Gastrocnemius medialis (tissue), 4 donors: ENCODE measurements at regions of chr9 and their contacts with region 1.

Region 1: DNA sequence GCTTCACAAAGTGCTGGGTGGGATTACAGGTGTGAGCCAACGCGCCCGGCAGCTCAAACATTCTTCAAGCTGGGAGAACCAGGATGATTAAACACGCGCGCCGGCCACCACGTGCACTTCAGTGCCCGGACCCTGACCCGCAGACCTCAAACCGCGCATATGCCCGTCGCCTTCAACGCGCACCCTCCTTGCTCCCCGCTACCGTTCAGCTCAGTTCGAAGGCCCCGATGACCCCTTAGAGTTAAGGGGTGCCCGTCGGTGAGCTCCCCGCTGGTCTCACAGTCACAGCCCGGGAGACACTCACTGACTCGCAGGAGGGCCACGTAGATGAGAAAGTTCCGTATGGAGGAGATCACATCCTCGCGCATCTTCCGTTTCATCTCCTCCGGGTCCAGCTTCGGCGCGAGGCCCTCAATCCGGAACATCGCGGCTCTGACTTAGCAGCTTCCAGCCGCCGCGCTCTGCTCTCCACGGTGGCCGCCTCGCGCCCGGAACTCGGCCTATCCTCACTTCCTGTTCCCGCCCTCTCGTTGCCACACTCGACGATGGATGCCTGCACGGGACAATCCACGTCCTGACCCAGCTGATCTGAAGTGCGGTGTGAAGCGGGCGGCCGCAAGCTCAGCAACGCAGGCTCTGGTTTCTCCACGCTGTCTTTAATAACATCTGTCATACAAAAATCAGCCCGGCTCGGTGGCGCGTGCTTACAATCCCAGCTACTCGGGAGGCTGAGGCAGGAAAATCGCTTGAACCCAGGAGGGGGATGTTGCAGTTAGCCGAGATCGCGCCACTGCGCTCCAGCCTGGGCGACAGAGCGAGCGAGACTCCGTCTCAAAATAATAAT is at the start of gene TOMM5:
- DNase-seq: peak; percentile 92
- ATAC-seq: peak; percentile 92 to 95
- H3K4me3 ChIP-seq: peak within 1 kb of the TSS; percentile 88 to 98 (median 92)
- H3K27ac ChIP-seq: peak within 1 kb of the TSS; percentile 89 to 94 (median 92)
- H3K4me1 ChIP-seq: peaks cover 22 to 29% of the 10 kb centered on the region in 2 donors
- H3K27me3 ChIP-seq: no peaks in the 10 kb centered on the region
- CTCF ChIP-seq: peak in 1 of 5 experiments; percentile 26
- POLR2A ChIP-seq: peak; percentile 88 to 95
- total RNA-seq, gene TOMM5: 75.3 to 137 (median 93.3) TPM

Region 2: DNA sequence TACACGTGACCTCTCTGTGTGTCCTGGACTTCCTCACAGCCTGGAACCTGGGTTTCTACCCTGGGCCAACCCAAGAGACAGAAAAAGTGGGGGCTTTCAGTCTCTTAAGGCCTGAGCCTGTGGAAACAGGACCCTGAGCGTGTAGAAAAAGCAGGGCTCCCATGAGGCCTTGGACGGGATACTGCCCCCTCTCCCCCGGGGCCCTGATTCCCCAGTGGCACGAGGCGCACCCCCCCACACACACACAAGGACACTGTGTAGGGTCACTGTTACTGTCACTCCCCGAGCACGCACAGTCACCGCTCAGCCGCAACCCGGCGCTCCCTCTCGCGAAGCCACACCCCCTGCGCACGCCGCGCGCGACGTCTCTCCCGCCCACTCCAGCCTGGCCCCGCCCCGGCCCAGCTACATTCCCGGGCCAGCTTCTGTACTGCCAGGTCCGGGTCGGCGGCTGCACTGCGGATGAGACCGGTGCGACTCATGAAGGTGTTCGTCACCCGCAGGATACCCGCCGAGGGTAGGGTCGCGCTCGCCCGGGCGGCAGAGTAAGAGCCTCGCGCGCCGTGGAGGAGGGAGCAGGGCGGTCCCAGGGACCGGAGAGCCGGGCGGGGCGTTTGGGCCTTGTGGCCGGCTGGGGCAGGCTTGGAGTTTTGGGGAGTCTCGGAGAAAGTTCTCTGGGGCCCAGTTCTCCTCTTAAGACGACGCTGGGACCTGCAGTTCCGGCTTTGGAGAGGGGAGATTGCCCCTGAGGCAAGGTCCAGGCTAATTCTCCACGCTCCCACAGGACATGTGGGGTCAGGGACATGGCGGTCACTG is 169.8 kb before region 1 on chr9 and contains the start of gene GRHPR:
- in situ Hi-C with region 1: no loop called
- intact Hi-C with region 1: loop called (anchors 5 kb)
- DNase-seq: peak; percentile 83 to 88
- ATAC-seq: peak; percentile 93 to 94
- H3K4me3 ChIP-seq: peak within 1 kb of the TSS; percentile 80 to 96 (median 92)
- H3K27ac ChIP-seq: peak within 1 kb of the TSS; percentile 86 to 94 (median 92)
- H3K4me1 ChIP-seq: peaks cover 25 to 27% of the 10 kb centered on the region in 2 donors
- H3K27me3 ChIP-seq: no peaks in the 10 kb centered on the region
- CTCF ChIP-seq: no peak
- POLR2A ChIP-seq: peak; percentile 69 to 75
- total RNA-seq, gene GRHPR: 119 to 138 (median 128) TPM

Region 3: GRCh38 chr9:37575921-37576721 is 16.2 kb before region 1 on chr9 and contains the start of gene FBXO10:
- in situ Hi-C with region 1: no loop called
- intact Hi-C with region 1: loop called (anchors 2 kb)
- DNase-seq: peak; percentile 53 to 72
- ATAC-seq: peak; percentile 62 to 71
- H3K4me3 ChIP-seq: peak within 1 kb of the TSS; percentile 84 to 96 (median 93)
- H3K27ac ChIP-seq: peak within 1 kb of the TSS; percentile 94 to 99 (median 98)
- H3K4me1 ChIP-seq: peaks cover 35 to 42% of the 10 kb centered on the region in 2 donors
- H3K27me3 ChIP-seq: no peaks in the 10 kb centered on the region
- CTCF ChIP-seq: peak in 1 of 5 experiments; percentile 24
- POLR2A ChIP-seq: peak; percentile 95 to 96
- total RNA-seq, gene FBXO10: 49.8 to 62.2 (median 53.5) TPM

Region 4: DNA sequence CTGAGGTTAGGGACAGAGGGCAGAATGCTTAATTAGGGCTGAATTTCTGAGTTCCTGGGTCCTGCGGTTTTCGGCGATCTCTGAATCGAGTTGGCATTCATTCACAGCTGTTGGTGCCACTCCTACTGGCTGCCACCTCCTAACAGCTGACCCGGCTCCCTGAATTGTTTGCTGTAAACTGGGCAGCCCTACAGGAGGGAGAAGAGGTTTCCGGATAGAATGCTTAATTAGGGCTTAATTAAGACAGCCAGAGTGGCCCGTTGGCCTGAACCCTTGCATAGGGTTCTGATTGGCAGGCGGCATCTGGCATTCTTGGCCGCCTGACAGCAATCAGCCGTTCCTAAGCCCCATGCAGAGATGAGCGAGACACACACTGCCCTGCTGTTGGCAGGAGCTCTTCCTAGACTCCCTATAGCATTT is 84.1 kb after region 1 on chr9:
- in situ Hi-C with region 1: loop called in 2 of 4 experiments (anchors 10 kb)
- intact Hi-C with region 1: no loop called
- DNase-seq: peak; percentile 52 to 54
- ATAC-seq: peak; percentile 84 to 85
- H3K4me3 ChIP-seq: peak overlapping the region; percentile 27 to 49 (median 42)
- H3K27ac ChIP-seq: peak overlapping the region; percentile 69 to 81 (median 74)
- H3K4me1 ChIP-seq: peaks cover 25 to 32% of the 10 kb centered on the region in 2 donors
- H3K27me3 ChIP-seq: no peaks in the 10 kb centered on the region
- CTCF ChIP-seq: no peak
- POLR2A ChIP-seq: no peak

Region 5: DNA sequence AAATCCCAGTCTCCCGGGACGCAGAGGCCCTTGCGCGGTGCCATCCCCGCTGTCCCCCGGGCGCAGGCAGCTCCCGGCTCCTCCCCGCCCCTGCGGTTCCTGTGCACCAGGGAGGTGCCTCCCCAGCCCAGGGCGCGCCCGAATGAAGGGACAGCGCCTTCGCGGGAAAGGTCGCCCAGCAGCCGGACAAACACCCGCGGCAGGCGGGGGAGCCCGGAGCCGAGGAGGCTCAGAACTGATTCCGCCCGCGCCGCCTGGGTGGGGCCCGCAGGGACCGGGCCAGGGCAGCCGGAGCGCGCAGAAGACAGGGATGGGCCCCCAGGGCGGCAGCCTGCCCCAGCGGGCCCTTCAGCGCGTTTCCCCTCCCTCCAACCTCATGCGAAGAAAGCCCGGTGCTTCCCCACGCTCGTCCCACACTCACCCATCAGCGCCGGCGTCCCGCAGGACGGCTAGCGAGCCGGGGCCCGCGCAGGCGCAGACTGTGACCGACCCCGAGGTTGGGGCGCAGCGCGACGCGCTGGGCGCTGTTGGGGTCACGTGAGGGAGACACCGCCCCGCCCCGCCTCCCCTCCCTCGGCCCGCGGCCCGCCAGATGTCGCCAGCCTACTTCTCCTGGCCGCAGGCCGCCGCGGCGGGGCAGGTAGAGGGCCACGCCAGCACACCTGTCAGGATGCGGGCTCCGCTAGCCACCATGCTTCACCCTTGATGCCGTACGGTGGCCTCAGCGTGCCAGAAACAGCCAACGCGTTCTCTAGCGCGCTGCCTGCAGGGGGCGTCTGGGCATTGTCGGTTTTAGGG is 311.5 kb after region 1 on chr9 and contains the start of gene SLC25A51:
- in situ Hi-C with region 1: loop called in 1 of 4 experiments (anchors 25 kb)
- intact Hi-C with region 1: no loop called
- DNase-seq: peak; percentile 80 to 91
- ATAC-seq: peak; percentile 92 to 95
- H3K4me3 ChIP-seq: peak within 1 kb of the TSS; percentile 75 to 93 (median 85)
- H3K27ac ChIP-seq: peak within 1 kb of the TSS; percentile 86 to 90 (median 88)
- H3K4me1 ChIP-seq: peaks cover 16 to 17% of the 10 kb centered on the region in 2 donors
- H3K27me3 ChIP-seq: no peaks in the 10 kb centered on the region
- CTCF ChIP-seq: peak; percentile 90 to 97 (median 96)
- POLR2A ChIP-seq: peak; percentile 74 to 81
- total RNA-seq, gene SLC25A51: 16.0 to 30.7 (median 22.2) TPM

Region 6: DNA sequence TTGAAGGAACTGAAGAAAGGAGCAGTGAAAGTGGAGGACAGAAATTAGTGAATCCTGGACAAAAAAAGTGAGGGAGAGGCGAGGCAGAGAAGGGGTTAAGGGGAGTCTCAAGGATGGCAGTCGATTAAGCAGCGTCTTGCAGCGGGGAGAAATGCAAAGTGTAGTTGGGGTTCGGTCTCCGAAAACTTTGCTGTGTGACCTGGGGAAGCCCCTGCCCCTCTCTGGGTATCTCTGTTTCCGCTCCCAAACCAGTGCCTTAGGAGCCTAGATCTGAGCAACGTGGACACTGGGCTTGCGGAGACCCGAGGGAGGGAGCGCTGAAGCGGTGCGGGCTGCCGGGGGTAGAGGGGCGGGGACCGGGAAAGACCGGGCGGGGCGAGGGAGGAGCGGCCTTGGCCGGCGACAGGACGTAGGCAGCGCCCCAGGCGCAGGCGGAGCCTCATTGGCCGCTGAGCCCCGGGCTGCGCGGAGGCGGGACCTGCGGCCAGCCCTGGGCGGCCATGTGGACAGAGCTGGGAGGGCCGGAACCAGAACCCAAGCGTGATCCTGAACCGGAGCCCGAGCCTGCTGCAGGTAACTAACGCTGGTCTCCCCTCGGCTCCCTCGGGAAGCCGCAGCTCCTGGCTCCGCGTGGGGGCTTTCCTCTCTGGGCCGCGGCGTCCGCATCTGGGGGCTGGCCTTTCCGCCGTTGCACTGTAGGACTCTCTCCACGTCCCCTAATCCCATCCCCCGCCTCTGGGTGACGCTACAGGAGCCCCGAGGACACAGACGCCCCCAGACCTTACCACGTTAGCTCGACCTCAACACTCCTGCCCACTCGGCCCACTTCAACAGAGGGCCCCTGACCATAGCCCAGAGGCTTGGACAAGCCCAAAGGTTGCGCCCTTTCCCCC is 800.2 kb after region 1 on chr9 and contains the start of gene ALDH1B1:
- in situ Hi-C with region 1: loop called in 1 of 4 experiments (anchors 25 kb)
- intact Hi-C with region 1: loop called (anchors 5 kb)
- DNase-seq: peak; percentile 78 to 79
- ATAC-seq: peak; percentile 84 to 88
- H3K4me3 ChIP-seq: peak within 1 kb of the TSS; percentile 65 to 82 (median 76)
- H3K27ac ChIP-seq: peak within 1 kb of the TSS; percentile 69 to 88 (median 82)
- H3K4me1 ChIP-seq: peaks cover 20 to 25% of the 10 kb centered on the region in 2 donors
- H3K27me3 ChIP-seq: no peaks in the 10 kb centered on the region
- CTCF ChIP-seq: peak in 2 of 5 experiments; percentile 10 to 26
- POLR2A ChIP-seq: peak; percentile 40 to 79
- total RNA-seq, gene ALDH1B1: 21.0 to 50.9 (median 36.0) TPM